Activated B cell treated with CpG ODN at 0.5 μM for 24 hours (primary cell): ENCODE measurements at regions of chr7 and their contacts with region 1.

Region 1: DNA sequence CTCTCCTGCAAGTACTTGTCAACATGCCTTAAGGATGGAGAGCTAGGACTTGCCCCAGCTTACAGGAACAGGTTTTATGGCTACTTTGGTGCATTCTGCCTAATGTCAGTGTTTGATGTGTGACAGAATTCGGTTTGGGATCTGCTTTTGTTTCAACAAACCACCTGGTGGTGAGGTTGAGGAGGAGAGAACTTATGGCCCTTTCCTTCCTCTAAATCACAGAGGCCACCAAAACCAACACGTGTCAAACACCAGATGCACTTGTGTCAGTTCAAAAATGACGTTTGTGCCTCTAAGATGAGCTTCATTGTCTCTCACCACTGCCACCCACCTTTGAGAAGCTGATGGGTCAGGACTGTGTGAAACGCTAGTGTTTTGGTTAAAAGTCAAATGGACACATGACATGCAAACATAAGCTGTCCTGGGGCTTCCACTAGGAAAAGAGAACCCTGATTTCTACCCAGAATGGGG is 83.9 kb downstream of the OSBPL3 start:
- DNase-seq: no peak
- ATAC-seq: peak; percentile 69
- H3K4me3 Mint-ChIP-seq: no peak overlapping the region
- H3K27ac Mint-ChIP-seq: peak overlapping the region; percentile 42
- H3K4me1 Mint-ChIP-seq: peaks cover 61% of the 10 kb centered on the region
- H3K27me3 Mint-ChIP-seq: no peaks in the 10 kb centered on the region
- CTCF ChIP-seq: no peak

Region 2: DNA sequence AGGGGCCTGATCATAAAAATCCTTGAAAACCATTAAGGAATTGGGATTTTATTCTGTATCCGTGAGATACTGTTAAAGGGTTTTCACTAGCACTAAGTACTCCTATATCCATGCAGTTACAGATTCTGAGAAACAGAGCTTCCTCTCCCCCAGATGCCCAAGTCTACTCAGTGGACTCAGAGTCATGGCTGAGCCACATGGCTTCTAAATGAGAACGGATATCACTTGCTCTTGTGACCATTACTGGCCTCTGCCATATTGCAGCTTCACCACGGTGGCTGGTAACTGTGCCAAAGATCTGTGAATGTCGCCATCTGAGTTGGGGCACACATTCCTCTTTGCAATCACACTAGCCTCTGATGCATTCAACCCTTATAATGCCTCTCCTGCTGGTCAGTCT is 364.8 kb before region 1 on chr7:
- CTCF ChIA-PET with region 1: no interaction called
- POLR2A ChIA-PET with region 1: no interaction called
- intact Hi-C with region 1: no loop called
- DNase-seq: no peak
- ATAC-seq: no peak
- H3K4me3 Mint-ChIP-seq: no peak overlapping the region
- H3K27ac Mint-ChIP-seq: no peak overlapping the region
- H3K4me1 Mint-ChIP-seq: no peaks in the 10 kb centered on the region
- H3K27me3 Mint-ChIP-seq: peaks cover 2% of the 10 kb centered on the region
- CTCF ChIP-seq: no peak

Region 3: DNA sequence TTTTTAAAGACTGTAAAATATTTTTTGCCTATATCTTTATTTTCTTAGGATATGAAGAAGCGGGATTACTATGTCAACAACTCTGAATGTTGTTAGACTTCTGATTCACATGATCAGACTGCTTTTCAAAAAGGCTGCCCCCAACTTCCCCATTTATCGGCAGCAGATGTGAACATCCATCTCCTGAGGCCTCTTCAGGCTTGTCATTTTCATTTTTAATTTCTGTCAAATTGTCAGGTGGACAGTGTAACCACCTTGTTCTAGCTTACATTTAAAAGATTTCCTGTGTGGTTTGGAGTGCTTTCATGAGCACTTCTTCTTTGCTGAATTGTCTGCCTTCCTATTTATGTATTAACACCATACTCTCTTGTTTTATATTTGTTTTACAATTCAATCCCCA is 60.0 kb before region 1 on chr7:
- CTCF ChIA-PET with region 1: no interaction called
- POLR2A ChIA-PET with region 1: interaction called, 20 read pairs
- intact Hi-C with region 1: no loop called
- DNase-seq: no peak
- ATAC-seq: peak; percentile 79
- H3K4me3 Mint-ChIP-seq: peak overlapping the region; percentile 39
- H3K27ac Mint-ChIP-seq: peak overlapping the region; percentile 99
- H3K4me1 Mint-ChIP-seq: peaks cover 75% of the 10 kb centered on the region
- H3K27me3 Mint-ChIP-seq: no peaks in the 10 kb centered on the region
- CTCF ChIP-seq: no peak

Region 4: DNA sequence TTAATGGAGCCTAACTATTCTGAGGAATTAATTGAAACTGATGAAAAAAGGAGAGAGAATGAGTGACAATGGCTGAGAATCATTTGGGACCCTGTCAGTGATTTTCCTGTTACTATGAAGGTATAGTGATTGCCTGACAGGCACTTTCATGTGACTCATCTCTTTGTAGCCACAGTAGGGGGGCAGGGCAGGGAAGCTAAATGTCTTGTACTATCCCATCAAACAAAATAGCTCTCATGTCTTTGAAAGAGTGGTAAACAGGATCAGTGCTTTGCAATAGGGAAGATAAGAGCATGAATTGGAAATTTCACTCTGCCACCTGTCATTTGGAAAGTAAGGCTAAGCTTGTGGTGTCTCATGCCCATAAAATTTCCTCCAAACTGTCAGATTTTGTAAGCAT is 44.3 kb before region 1 on chr7:
- CTCF ChIA-PET with region 1: no interaction called
- POLR2A ChIA-PET with region 1: no interaction called
- intact Hi-C with region 1: no loop called
- DNase-seq: no peak
- ATAC-seq: no peak
- H3K4me3 Mint-ChIP-seq: no peak overlapping the region
- H3K27ac Mint-ChIP-seq: no peak overlapping the region
- H3K4me1 Mint-ChIP-seq: peaks cover 7% of the 10 kb centered on the region
- H3K27me3 Mint-ChIP-seq: no peaks in the 10 kb centered on the region
- CTCF ChIP-seq: no peak

Region 5: DNA sequence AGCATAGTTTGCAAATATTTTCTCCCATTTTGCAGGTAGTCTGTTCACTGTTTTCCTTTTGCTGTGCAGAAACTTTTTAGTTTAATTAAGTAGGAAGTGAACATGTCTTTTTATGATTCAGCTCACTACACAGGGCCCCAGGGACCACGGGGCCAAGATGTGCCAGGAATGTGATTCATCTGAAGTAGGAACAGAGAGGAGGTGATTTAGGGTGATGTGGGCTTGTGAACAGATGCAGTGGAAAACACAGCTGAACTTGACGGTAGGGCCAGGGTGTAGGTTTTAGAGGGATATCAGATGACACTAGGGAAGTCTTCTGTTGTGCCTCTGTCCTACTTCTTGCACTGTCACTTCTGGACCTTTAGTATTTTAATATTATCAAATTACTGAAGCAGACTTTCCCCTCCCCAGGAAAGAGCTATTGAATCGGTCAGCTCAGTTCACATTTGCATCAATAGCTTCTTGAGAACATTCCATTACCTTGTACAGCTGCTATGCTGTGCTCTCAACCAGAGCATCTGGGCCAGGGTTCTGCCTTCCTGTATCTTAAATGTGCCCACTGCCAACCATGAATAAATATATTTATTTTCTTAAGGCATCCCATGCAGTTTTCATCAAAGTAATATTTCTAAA is 13.0 kb before region 1 on chr7:
- CTCF ChIA-PET with region 1: interaction called, 10 read pairs
- POLR2A ChIA-PET with region 1: interaction called, 3 read pairs
- intact Hi-C with region 1: loop called (anchors 2 kb)
- DNase-seq: no peak
- ATAC-seq: peak; percentile 55
- H3K4me3 Mint-ChIP-seq: no peak overlapping the region
- H3K27ac Mint-ChIP-seq: no peak overlapping the region
- H3K4me1 Mint-ChIP-seq: peaks cover 36% of the 10 kb centered on the region
- H3K27me3 Mint-ChIP-seq: no peaks in the 10 kb centered on the region
- CTCF ChIP-seq: no peak

Region 6: GRCh38 chr7:25032774-25033743 is 137.0 kb after region 1 on chr7:
- CTCF ChIA-PET with region 1: no interaction called
- POLR2A ChIA-PET with region 1: no interaction called
- intact Hi-C with region 1: no loop called
- DNase-seq: no peak
- ATAC-seq: no peak
- H3K4me3 Mint-ChIP-seq: no peak overlapping the region
- H3K27ac Mint-ChIP-seq: no peak overlapping the region
- H3K4me1 Mint-ChIP-seq: peaks cover 10% of the 10 kb centered on the region
- H3K27me3 Mint-ChIP-seq: peaks cover 2% of the 10 kb centered on the region
- CTCF ChIP-seq: no peak